ENCODE measurements at regions of chr2 and their contacts with region 1.

Region 1: DNA sequence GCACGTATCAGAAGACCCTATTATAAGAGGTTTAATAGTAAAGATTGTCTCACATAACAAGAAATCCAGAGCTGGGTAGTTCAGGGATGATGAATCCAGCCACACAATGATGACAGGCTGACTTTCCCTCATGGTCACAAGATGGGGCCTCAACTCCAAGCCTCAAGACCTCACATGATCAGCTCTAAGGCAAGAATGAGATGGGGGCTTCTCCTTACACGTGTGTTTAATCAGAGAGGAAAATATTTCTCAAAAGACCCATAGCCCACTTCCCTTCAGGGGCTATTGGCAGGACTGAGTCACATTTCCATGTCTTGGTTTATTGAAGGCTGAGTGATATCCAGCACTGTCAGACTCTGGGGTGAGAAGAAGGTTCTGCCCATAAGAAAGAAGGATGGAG is 100.2 kb upstream of the FOSL2 start:
- DNase-seq: no peak
- H3K4me3 Mint-ChIP-seq: no peak overlapping the region
- H3K27ac Mint-ChIP-seq: no peak overlapping the region
- H3K4me1 Mint-ChIP-seq: peaks cover 12% of the 10 kb centered on the region
- H3K27me3 Mint-ChIP-seq: no peaks in the 10 kb centered on the region

Region 2: DNA sequence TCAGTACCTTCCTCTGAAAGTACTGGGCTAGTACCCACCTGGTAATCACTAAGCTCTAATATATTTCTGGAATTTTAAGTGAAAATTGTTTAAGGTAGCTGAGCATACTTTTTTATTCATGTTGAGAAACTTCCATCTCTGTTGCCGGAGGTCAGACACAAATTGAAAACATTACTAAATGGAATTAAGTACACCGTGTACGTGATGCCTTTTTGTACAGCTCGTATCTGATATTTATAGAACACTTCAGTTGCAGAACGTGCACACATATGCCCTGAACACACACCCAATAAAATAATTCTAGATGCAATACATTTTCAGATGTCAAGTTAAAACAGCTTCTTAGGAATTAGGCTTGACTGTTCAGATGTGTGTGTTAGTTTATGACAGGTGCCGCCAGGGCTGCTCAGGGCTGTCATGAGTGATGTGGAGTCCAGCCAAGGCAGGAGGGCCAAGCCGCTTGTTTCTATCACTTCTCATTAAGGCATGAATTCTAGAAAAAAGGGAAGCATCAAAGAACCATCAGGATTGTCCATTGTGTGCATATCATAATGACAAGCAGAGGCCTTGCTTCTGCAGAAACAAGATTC is 19.3 kb after region 1 on chr2:
- intact Hi-C with region 1: no loop called
- DNase-seq: no peak
- H3K4me3 Mint-ChIP-seq: no peak overlapping the region
- H3K27ac Mint-ChIP-seq: no peak overlapping the region
- H3K4me1 Mint-ChIP-seq: peaks cover 8% of the 10 kb centered on the region
- H3K27me3 Mint-ChIP-seq: no peaks in the 10 kb centered on the region

Region 3: GRCh38 chr2:28327947-28328922 is 35.7 kb after region 1 on chr2:
- intact Hi-C with region 1: loop called (anchors 1 kb)
- DNase-seq: no peak
- H3K4me3 Mint-ChIP-seq: no peak overlapping the region
- H3K27ac Mint-ChIP-seq: no peak overlapping the region
- H3K4me1 Mint-ChIP-seq: peaks cover 14% of the 10 kb centered on the region
- H3K27me3 Mint-ChIP-seq: no peaks in the 10 kb centered on the region

Region 4: GRCh38 chr2:29022681-29023080 is 730.2 kb after region 1 on chr2:
- intact Hi-C with region 1: no loop called
- DNase-seq: no peak
- H3K4me3 Mint-ChIP-seq: no peak overlapping the region
- H3K27ac Mint-ChIP-seq: no peak overlapping the region
- H3K4me1 Mint-ChIP-seq: peaks cover 3% of the 10 kb centered on the region
- H3K27me3 Mint-ChIP-seq: no peaks in the 10 kb centered on the region

Measured in activated T-helper 2 cell treated with anti-CD3 and anti-CD28 coated beads, Interferon-gamma antibody, Interleukin-2, Interleukin-4, amounts not matched to agents 10 μg/mL and 5 μg/mL and 100 μg/mL, durations not matched to agents 14 hours and 24 hours and 36 hours (primary cell).